ENCODE measurements at regions of chr16 and their contacts with region 1.

Region 1: DNA sequence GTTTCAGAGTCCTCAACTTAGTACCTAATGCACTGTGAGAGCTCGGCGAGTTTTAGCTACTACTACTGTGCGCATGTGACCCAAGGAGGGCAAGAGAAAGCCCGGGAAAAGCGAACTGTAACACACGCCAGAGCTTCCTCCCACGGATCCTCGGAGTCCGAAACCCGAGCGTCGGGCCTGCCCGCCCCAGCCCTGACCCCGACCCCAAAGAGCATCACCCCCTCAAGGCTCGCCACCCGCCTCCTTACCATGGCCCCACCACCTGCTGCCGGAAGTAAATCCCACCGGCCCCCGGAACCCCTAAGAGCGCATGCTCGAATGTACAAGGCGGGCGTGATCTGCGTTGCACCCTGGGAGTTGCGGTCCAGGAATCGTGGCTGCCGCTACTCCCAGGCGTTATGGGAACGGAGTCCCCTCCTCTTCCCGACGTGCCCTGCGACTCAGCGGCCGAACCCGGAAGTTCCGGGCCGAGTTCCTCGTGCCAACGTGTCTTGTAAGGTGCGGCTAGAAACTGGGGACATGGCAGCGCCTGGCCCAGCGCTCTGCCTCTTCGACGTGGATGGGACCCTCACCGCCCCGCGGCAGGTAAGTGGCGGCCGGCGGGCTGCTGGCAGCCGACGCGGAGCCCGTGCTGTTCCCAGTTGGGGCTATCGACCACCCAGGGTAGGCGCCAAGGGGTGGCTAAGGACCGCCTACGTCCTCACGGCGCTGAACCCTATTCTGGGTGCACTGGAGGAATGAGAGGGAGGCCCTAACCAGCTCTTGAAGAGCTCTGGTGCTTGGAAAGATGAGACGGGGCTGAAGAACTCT is at the starts of genes PMM2 and TMEM186:
- DNase-seq: peak; percentile 97 to 98 (median 98)
- ATAC-seq: peak; percentile 99
- H3K4me3 ChIP-seq: peak within 1 kb of the TSS; percentile 86
- H3K27ac ChIP-seq: peak within 1 kb of the TSS; percentile 65
- H3K4me1 ChIP-seq: peaks cover 10% of the 10 kb centered on the region
- H3K27me3 ChIP-seq: no peaks in the 10 kb centered on the region
- total RNA-seq, gene PMM2: 10.5 to 29.4 (median 13.0) TPM
- total RNA-seq, gene TMEM186: 12.2 to 12.8 (median 12.3) TPM

Region 2: GRCh38 chr16:8408855-8409567 is 388.6 kb before region 1 on chr16:
- intact Hi-C with region 1: no loop called
- DNase-seq: no peak
- ATAC-seq: no peak
- H3K4me3 ChIP-seq: no peak overlapping the region
- H3K27ac ChIP-seq: no peak overlapping the region
- H3K4me1 ChIP-seq: no peaks in the 10 kb centered on the region
- H3K27me3 ChIP-seq: no peaks in the 10 kb centered on the region

Region 3: GRCh38 chr16:8660841-8661301 is 136.7 kb before region 1 on chr16:
- intact Hi-C with region 1: loop called in 2 of 4 experiments (anchors 5 kb)
- DNase-seq: peak; percentile 57 to 90 (median 71)
- ATAC-seq: peak; percentile 86 to 87
- H3K4me3 ChIP-seq: no peak overlapping the region
- H3K27ac ChIP-seq: no peak overlapping the region
- H3K4me1 ChIP-seq: no peaks in the 10 kb centered on the region
- H3K27me3 ChIP-seq: no peaks in the 10 kb centered on the region

Region 4: GRCh38 chr16:8674413-8675022 is 123.1 kb before region 1 on chr16 and contains the start of gene ABAT:
- intact Hi-C with region 1: loop called in 1 of 4 experiments (anchors 10 kb)
- DNase-seq: peak; percentile 91 to 97 (median 95)
- ATAC-seq: peak; percentile 100
- H3K4me3 ChIP-seq: peak within 1 kb of the TSS; percentile 79
- H3K27ac ChIP-seq: no peak within 1 kb of the TSS
- H3K4me1 ChIP-seq: no peaks in the 10 kb centered on the region
- H3K27me3 ChIP-seq: no peaks in the 10 kb centered on the region
- total RNA-seq, gene ABAT: 12.3 to 42.4 (median 20.2) TPM

Region 5: DNA sequence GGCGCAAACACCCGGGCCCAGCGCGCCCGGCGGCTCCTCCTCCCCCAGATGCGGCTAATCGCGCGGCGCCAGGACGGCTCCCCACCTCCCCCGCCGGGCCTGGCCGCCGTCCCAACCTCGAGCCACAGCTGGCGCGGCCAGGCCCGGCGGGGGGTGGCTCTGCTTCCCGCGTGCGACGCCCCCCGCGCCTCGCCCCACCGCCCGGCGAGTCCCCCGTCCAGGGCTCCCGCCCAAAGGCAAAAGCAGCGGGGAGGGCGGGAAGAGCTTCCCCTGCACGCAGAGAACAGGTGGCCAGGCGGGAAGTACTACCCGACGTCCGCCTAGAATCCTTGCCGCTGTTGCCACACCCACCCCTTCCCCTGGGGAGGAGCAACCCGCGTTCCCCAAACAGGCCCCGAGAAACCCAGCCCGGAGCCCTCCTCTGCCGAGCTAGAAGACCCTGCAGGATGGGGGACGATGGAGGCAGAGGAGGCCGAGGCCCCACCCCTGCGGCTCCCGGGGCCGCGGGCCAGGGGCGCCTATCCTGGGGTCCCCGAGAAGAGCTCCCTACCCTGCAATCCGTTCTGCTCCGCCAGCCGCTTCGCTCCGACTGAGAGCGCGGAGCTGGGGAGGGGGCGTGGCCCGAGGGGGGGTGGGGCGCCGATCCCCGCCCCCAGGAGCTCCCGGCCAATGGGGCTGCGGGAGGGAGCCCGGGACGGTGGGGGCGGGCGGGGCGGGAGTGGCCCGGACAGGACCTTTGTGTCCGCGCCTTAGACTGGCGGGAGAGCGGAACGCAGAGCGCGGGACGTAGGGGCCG is 71.0 kb after region 1 on chr16 and contains the start of gene CARHSP1:
- intact Hi-C with region 1: loop called in 1 of 4 experiments (anchors 10 kb)
- DNase-seq: peak; percentile 88 to 95 (median 94)
- ATAC-seq: peak; percentile 88 to 93
- H3K4me3 ChIP-seq: peak within 1 kb of the TSS; percentile 93
- H3K27ac ChIP-seq: peak within 1 kb of the TSS; percentile 94
- H3K4me1 ChIP-seq: peaks cover 19% of the 10 kb centered on the region
- H3K27me3 ChIP-seq: no peaks in the 10 kb centered on the region
- total RNA-seq, gene CARHSP1: 28.6 to 37.2 (median 35.0) TPM

Measured in right cardiac atrium (tissue), 5 donors.